ENCODE measurements at regions of chr17 and their contacts with region 1.

Region 1: DNA sequence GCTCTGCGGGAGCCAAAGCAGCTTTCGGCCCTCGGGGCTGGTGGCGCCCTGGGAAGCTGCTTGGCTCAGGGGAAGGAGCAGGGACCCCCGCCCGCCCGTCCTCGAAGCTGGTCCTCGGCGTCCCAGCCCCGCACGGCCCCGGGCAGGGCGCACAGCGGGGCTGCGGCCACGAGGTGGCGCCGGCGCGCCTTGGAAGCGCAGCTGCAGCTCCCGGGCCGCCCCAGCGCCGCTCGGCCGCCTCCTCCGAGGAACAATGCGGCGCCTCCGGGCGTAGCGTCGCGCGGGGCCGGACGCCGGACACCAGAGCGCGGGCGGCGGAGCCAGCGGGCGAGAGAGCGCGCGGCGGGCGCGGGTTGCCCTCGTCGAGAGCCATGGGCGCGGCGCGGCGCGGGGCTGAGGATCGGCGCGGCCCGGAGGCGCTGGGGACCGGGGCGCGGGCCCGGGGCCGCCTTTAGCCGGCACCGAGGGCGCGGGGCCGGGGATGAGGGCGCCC is at the start of gene MGAT5B:
- DNase-seq: peak; percentile 74
- ATAC-seq: peak; percentile 97
- H3K4me3 Mint-ChIP-seq: peak within 1 kb of the TSS; percentile 38
- H3K27ac Mint-ChIP-seq: no peak within 1 kb of the TSS
- H3K4me1 Mint-ChIP-seq: peaks cover 13% of the 10 kb centered on the region
- H3K27me3 Mint-ChIP-seq: peaks cover 41% of the 10 kb centered on the region
- total RNA-seq, gene MGAT5B: 0.18 to 0.68 TPM

Region 2: GRCh38 chr17:76879691-76880090 is 11.5 kb after region 1 on chr17:
- CTCF ChIA-PET with region 1: interaction called, 11 read pairs
- DNase-seq: no peak
- ATAC-seq: no peak
- H3K4me3 Mint-ChIP-seq: no peak overlapping the region
- H3K27ac Mint-ChIP-seq: no peak overlapping the region
- H3K4me1 Mint-ChIP-seq: no peaks in the 10 kb centered on the region
- H3K27me3 Mint-ChIP-seq: no peaks in the 10 kb centered on the region

Region 3: GRCh38 chr17:77011173-77012011 is 143.2 kb after region 1 on chr17:
- CTCF ChIA-PET with region 1: interaction called, 14 read pairs
- DNase-seq: peak; percentile 68
- ATAC-seq: peak; percentile 42
- H3K4me3 Mint-ChIP-seq: no peak overlapping the region
- H3K27ac Mint-ChIP-seq: no peak overlapping the region
- H3K4me1 Mint-ChIP-seq: no peaks in the 10 kb centered on the region
- H3K27me3 Mint-ChIP-seq: peaks cover 41% of the 10 kb centered on the region

Region 4: GRCh38 chr17:77061669-77062068 is 193.4 kb after region 1 on chr17:
- CTCF ChIA-PET with region 1: interaction called, 121 read pairs
- DNase-seq: no peak
- ATAC-seq: no peak
- H3K4me3 Mint-ChIP-seq: no peak overlapping the region
- H3K27ac Mint-ChIP-seq: no peak overlapping the region
- H3K4me1 Mint-ChIP-seq: no peaks in the 10 kb centered on the region
- H3K27me3 Mint-ChIP-seq: peaks cover 28% of the 10 kb centered on the region

Measured in activated CD8-positive, alpha-beta memory T cell treated with anti-CD3 and anti-CD28 coated beads, Interleukin-2, amount 10 ng/mL, durations not matched to agents 7 days and 5 days (primary cell).